ENCODE measurements at regions of chr10 and their contacts with region 1.

Region 1: DNA sequence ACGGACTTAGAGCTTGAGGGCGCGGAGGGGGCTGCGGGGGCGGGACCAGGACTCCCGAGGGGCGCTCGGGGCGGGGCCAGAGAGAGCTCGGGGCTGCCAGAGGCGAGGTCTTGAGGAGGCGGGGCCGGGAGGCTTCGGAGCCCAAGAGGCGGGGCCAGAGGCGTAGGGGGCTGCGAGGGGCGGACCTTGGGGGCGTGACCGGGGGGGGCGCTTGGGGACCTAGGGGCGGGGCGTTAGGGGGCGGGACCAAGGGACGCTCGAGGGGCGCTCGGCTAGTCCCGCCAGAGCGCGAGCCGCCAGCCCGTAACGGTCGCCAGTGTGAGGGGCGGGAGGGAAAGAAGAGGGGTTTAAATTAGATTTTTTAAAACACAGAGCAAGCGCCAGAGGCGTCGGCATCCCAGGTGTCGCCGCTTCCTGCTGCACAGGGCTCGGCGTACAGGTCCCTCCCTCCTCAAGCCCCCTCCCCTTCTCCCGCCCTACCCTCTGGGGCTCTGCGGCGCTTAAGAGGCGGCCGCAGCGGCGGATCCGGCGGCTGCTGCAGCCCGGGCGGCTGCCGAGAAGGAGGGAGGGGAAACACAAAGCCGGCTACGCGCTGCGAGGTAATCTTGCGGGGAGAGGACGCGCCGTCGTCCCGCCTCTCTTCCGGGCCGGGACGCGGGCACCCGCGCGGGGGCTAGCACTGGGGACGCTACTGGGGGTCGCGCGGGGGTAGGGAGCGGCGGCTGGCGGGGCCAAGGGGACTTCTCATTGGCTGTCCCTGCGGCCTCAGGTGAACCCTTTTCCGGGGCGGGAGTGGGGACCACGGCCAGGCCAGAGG is at the start of gene ADD3:
- DNase-seq: peak; percentile 81
- H3K4me3 Mint-ChIP-seq: peak within 1 kb of the TSS; percentile 92
- H3K27ac Mint-ChIP-seq: peak within 1 kb of the TSS; percentile 89
- H3K4me1 Mint-ChIP-seq: peaks cover 41% of the 10 kb centered on the region
- H3K27me3 Mint-ChIP-seq: peaks cover 4% of the 10 kb centered on the region
- total RNA-seq, gene ADD3: 37.8 and 47.4 TPM in 2 replicates

Region 2: GRCh38 chr10:109883859-109884771 is 123.8 kb before region 1 on chr10:
- intact Hi-C with region 1: loop called (anchors 2 kb)
- DNase-seq: peak; percentile 43
- H3K4me3 Mint-ChIP-seq: no peak overlapping the region
- H3K27ac Mint-ChIP-seq: no peak overlapping the region
- H3K4me1 Mint-ChIP-seq: peaks cover 10% of the 10 kb centered on the region
- H3K27me3 Mint-ChIP-seq: no peaks in the 10 kb centered on the region

Region 3: DNA sequence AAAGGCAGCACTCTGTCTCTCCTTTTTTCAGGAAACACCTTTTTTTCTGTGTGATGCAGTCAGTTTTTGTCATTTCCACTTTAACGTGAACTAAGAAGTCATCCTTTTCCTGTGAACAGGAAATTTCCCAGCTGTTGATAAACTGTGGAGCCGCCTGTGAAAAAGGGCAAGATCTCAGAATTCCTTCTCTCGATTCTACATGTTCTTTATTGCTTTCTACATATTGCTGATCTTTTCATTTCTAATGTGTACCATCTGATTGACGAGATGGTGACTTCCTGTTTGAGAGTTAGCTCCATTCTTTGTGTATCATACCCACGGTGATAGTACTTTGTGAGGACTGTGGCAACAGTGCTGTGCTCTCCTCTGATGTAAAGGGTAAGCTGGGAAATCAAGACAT is 50.3 kb after region 1 on chr10:
- intact Hi-C with region 1: loop called (anchors 1 kb)
- DNase-seq: no peak
- H3K4me3 Mint-ChIP-seq: peak overlapping the region; percentile 75
- H3K27ac Mint-ChIP-seq: peak overlapping the region; percentile 86
- H3K4me1 Mint-ChIP-seq: peaks cover 57% of the 10 kb centered on the region
- H3K27me3 Mint-ChIP-seq: no peaks in the 10 kb centered on the region

Region 4: GRCh38 chr10:110076559-110077318 is 68.8 kb after region 1 on chr10:
- intact Hi-C with region 1: loop called (anchors 1 kb)
- DNase-seq: peak; percentile 41
- H3K4me3 Mint-ChIP-seq: peak overlapping the region; percentile 79
- H3K27ac Mint-ChIP-seq: peak overlapping the region; percentile 95
- H3K4me1 Mint-ChIP-seq: peaks cover 70% of the 10 kb centered on the region
- H3K27me3 Mint-ChIP-seq: no peaks in the 10 kb centered on the region

Region 5: DNA sequence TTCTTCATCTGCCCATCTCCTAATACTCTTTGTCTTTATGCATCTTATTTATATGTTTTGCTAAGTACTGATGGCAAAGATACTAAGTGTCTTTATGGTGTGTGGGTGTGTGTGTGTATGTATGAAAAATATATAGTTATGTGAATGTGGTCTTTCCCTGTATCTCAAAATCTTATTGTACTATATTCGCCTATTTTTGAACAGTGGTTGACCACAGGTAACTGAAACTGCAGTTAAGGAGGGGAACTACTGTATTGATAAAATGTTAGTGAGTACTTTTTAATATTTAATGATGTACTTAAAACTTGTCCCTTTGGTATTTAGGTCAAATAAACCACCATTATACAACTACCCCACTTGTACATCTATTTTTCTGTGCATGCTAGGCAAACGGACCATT is 85.8 kb after region 1 on chr10:
- intact Hi-C with region 1: no loop called
- DNase-seq: no peak
- H3K4me3 Mint-ChIP-seq: no peak overlapping the region
- H3K27ac Mint-ChIP-seq: no peak overlapping the region
- H3K4me1 Mint-ChIP-seq: peaks cover 16% of the 10 kb centered on the region
- H3K27me3 Mint-ChIP-seq: no peaks in the 10 kb centered on the region

Region 6: GRCh38 chr10:110151467-110151866 is 143.6 kb after region 1 on chr10:
- intact Hi-C with region 1: no loop called
- DNase-seq: no peak
- H3K4me3 Mint-ChIP-seq: no peak overlapping the region
- H3K27ac Mint-ChIP-seq: no peak overlapping the region
- H3K4me1 Mint-ChIP-seq: peaks cover 28% of the 10 kb centered on the region
- H3K27me3 Mint-ChIP-seq: peaks cover 67% of the 10 kb centered on the region

Region 7: GRCh38 chr10:110279407-110279986 is 271.6 kb after region 1 on chr10:
- intact Hi-C with region 1: no loop called
- DNase-seq: peak; percentile 17
- H3K4me3 Mint-ChIP-seq: no peak overlapping the region
- H3K27ac Mint-ChIP-seq: no peak overlapping the region
- H3K4me1 Mint-ChIP-seq: peaks cover 8% of the 10 kb centered on the region
- H3K27me3 Mint-ChIP-seq: peaks cover 31% of the 10 kb centered on the region

Region 8: DNA sequence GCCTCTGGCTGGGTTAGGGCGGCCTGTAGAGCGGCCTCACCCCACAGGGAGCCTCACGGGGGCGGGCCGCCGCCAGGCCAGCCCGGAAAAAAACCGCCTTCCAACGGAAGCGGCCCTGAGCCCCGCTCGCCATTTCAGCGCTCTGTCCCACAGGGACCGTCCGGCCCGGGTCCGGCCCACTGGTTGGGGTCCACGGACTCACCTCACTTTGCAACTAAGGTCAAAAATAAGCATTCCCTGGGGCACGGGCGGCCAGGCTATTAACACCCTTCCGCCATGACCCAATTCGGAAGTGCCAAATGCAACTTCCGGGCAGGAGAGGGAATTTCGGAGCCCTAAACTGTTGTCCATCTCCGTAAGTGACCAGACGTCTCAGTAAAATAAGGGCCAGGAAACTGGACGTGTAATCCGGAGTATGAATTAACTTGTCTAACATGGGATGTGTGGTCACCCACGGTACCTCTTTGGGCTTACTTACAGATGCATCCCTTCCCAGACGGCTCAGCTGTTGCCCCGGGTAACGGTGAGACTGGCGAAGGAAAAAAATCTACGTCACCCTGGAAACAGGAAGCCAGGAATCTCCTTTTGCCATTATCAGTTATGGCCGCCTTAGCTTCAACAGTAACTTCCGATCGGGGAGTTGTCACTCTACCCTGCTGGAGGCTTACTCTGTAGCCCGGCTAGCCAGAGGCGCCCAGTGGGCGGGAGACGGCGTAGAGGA is 910.9 kb after region 1 on chr10 and contains the start of gene BBIP1:
- intact Hi-C with region 1: loop called (anchors 2 kb)
- DNase-seq: no peak
- H3K4me3 Mint-ChIP-seq: peak within 1 kb of the TSS; percentile 94
- H3K27ac Mint-ChIP-seq: peak within 1 kb of the TSS; percentile 93
- H3K4me1 Mint-ChIP-seq: peaks cover 39% of the 10 kb centered on the region
- H3K27me3 Mint-ChIP-seq: no peaks in the 10 kb centered on the region
- total RNA-seq, gene BBIP1: 31.5 and 32.7 TPM in 2 replicates

Measured in activated T-helper 2 cell treated with anti-CD3 and anti-CD28 coated beads, Interferon-gamma antibody, Interleukin-2, Interleukin-4, amounts not matched to agents 10 μg/mL and 5 μg/mL and 100 μg/mL, durations not matched to agents 14 hours and 24 hours and 36 hours (primary cell).